Uterus (tissue), 4 donors: ENCODE measurements at regions of chr2 and their contacts with region 1.

Region 1: DNA sequence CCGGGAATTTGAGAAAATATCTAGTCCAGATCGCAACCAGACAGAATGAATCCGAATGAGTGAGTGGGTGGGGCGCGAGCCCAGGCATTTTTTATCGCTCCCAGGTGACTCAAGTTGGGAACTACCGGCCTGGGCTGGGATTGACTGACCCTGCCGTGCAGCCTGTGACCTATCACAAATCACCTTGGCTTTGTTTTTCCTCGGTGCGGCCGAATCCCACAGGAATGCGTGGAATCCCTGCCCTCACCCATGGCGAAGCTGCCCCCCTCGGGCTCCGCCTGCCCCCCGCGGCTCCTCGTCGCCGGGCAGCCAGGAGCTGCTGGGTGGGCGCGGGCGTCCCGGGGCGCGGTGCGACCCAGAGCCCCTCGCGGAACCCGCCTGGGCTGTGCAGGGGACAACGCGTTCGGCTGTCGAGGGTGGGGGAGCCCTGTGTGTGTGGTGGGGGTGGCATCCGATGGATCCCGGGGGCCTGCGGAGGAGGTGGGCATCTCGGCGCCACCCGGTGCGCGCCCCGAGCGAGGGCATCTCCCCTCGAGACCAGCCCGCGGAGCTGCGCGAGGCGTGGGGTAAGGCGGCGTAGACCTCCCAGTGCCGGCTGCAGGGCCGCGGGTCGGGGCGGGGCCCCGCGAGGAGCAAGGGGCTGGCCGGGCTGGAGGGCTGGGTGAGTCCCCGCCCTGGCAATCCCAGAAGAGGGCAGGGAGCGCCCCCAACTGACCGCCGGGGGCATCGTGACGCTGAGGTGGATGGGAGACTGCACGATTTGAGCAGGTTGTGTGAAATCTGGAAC is 16.5 kb downstream of the B3GNT7 start:
- DNase-seq: peak; percentile 87 to 91
- H3K4me3 ChIP-seq: peak overlapping the region; percentile 21 to 60
- H3K27ac ChIP-seq: peak overlapping the region; percentile 20 to 77
- H3K4me1 ChIP-seq: no peaks in the 10 kb centered on the region
- H3K27me3 ChIP-seq: no peaks in the 10 kb centered on the region
- CTCF ChIP-seq: peak; percentile 80 to 93 (median 90)
- POLR2A ChIP-seq: peak in 1 of 2 donors; percentile 38

Region 2: GRCh38 chr2:231227309-231228162 is 184.5 kb before region 1 on chr2:
- intact Hi-C with region 1: loop called (anchors 10 kb)
- DNase-seq: peak; percentile 49 to 72
- H3K4me3 ChIP-seq: no peak overlapping the region
- H3K27ac ChIP-seq: peak overlapping the region; percentile 37 to 61
- H3K4me1 ChIP-seq: no peaks in the 10 kb centered on the region
- H3K27me3 ChIP-seq: no peaks in the 10 kb centered on the region
- CTCF ChIP-seq: peak; percentile 69 to 91 (median 82)
- POLR2A ChIP-seq: no peak